A549 (cell line): ENCODE measurements at regions of chr11 and their contacts with region 1.

Region 1: DNA sequence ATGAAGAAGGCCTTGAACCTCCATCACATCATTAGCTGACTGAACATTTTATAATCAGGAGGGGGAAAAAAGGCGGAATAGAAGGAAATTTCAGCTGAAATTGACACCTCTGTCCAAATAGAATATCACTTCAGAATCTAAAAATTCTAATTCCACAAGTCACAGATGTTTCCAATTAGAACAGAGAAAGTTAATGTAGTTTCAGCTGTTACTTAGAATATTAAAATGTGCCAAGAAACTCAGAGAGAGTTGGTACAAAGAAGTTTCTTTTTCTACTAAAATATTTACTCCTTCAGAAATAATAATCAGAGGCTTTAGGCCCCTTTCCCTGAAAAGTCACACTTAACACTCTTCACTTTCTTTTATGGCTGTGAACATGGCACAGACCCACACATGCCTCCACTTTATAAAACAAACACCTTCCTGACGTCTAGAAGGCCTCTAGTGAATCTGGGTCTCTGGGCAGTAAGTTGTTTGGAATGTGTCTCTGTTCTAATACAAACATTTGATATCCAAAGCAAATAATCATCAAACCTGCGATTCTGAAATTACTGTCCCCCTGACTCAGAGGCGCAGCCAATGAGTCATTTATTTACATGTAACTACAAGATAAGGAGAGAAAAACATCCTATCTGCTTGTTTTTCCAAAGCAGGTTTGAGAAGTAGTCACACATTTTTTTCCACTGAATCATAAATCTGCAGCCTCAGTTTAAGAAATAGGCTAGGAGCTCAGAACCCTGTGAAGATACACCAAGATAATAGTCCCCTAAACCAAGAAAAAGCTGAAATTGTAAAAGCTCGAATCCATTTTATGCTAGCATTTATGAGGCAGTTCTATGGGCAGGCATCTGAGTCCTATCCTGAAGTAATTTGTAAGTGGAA is 148.4 kb downstream of the ME3 start:
- DNase-seq: peak; percentile 97 to 98
- ATAC-seq: peak; percentile 94 to 98
- H3K4me3 ChIP-seq: no peak overlapping the region
- H3K27ac ChIP-seq: peak overlapping the region; percentile 90
- H3K4me1 ChIP-seq: peaks cover 41% of the 10 kb centered on the region
- CTCF ChIP-seq: no peak
- EP300 ChIP-seq: peak; percentile 98
- POLR2A ChIP-seq: no peak
- RAD21 ChIP-seq: peak; percentile 57 to 75

Region 2: GRCh38 chr11:86483940-86484794 is 39.8 kb before region 1 on chr11:
- CTCF ChIA-PET with region 1: interaction called, 5 read pairs
- POLR2A ChIA-PET with region 1: interaction called, 30 read pairs
- DNase-seq: peak; percentile 91 to 97
- ATAC-seq: peak; percentile 95
- H3K4me3 ChIP-seq: no peak overlapping the region
- H3K27ac ChIP-seq: peak overlapping the region; percentile 77 to 89
- H3K4me1 ChIP-seq: peaks cover 60% of the 10 kb centered on the region
- CTCF ChIP-seq: no peak
- EP300 ChIP-seq: peak; percentile 94 to 96; a peak in 4 of 5 replicates
- POLR2A ChIP-seq: no peak
- RAD21 ChIP-seq: peak; percentile 19 to 61